CD4-positive, alpha-beta T cell (primary cell): ENCODE measurements at regions of chr4 and their contacts with region 1.

Region 1: DNA sequence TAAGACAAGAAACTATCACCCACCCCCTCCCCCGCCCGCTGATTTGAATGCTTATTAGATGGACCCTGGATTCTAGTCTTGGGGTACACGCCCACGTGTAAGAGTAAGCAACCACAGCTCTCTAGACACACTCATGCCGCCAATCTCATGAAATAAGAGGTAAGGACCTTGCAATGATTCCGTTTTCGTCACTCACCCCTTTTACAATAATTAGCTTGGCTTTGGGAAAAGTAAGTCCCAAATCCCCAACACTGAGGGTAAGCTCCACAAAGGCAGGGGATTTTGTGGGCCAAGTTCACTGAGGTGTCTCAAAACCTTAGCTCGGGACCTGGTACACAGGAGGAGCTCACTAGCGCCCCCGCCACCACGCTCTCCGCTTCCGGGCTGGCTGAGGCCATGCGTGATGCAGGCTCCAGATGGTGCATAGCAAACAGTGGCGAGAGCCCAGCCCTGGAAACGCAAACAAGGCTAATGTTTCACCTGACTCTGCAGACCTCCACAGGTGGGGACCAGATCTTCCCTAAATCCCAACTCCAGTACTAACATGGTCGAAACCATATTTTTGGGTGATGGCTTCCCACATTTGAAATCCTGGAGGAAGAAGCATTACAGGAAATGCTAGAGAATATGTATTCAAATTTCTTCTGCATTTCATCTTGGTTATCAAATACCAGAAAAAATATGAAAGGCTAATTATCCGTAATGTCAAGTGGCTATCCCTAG is 4.1 kb downstream of the PLAC8 start:
- DNase-seq: peak; percentile 79 to 94 (median 86)
- ATAC-seq: peak; percentile 76
- H3K4me3 ChIP-seq: peak overlapping the region; percentile 83
- H3K4me3 Mint-ChIP-seq: peak overlapping the region; percentile 88
- H3K27ac ChIP-seq: peak overlapping the region; percentile 44 to 65
- H3K27ac Mint-ChIP-seq: peak overlapping the region; percentile 89
- H3K4me1 ChIP-seq: peaks cover 45% of the 10 kb centered on the region
- H3K4me1 Mint-ChIP-seq: peaks cover 64% of the 10 kb centered on the region
- H3K27me3 ChIP-seq: no peaks in the 10 kb centered on the region
- H3K27me3 Mint-ChIP-seq: no peaks in the 10 kb centered on the region
- CTCF ChIP-seq: peak; percentile 85

Region 2: GRCh38 chr4:82677321-82677720 is 433.1 kb before region 1 on chr4:
- CTCF ChIA-PET with region 1: no interaction called
- POLR2A ChIA-PET with region 1: no interaction called
- intact Hi-C with region 1: no loop called
- DNase-seq: no peak
- ATAC-seq: no peak
- H3K4me3 ChIP-seq: no peak overlapping the region
- H3K4me3 Mint-ChIP-seq: no peak overlapping the region
- H3K27ac ChIP-seq: no peak overlapping the region
- H3K27ac Mint-ChIP-seq: no peak overlapping the region
- H3K4me1 ChIP-seq: no peaks in the 10 kb centered on the region
- H3K4me1 Mint-ChIP-seq: no peaks in the 10 kb centered on the region
- H3K27me3 ChIP-seq: peaks cover 2 to 4% of the 10 kb centered on the region in 2 experiments
- H3K27me3 Mint-ChIP-seq: peaks cover 5% of the 10 kb centered on the region
- CTCF ChIP-seq: no peak

Region 3: DNA sequence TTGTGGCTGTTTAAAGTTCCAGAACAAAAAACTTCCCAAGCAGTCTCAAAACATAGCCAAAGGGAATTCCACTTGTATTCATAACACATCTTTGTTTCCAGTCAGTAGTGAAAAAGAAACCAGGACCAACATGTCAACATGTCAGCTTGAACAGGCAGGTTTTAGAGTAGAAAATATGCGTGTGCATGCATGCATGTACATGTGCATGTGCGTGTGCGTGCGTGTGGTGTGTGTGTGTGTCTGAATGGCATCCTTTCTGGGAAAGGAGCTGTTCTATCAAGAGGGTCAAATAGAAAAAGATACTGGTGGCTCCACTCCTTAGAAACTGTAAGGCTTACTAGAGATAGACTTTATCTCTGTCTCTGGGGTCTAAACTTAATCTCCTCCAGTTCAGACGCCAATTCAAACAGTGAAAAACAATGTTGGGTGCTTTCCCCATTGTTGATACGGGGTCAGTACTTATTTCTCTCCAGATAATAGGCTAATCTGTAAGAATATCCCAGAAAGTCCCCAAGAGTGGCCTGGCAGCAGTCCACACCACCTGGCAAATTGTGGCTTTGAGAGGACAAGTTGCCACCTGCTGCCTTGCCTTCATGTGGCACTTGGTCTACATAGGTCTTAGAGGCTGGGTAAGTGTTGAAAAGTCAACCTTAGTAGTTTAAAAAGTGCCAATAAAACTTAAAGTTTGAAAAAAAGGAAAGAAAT is 422.1 kb before region 1 on chr4:
- CTCF ChIA-PET with region 1: no interaction called
- POLR2A ChIA-PET with region 1: no interaction called
- intact Hi-C with region 1: no loop called
- DNase-seq: no peak
- ATAC-seq: no peak
- H3K4me3 ChIP-seq: no peak overlapping the region
- H3K4me3 Mint-ChIP-seq: no peak overlapping the region
- H3K27ac ChIP-seq: no peak overlapping the region
- H3K27ac Mint-ChIP-seq: no peak overlapping the region
- H3K4me1 ChIP-seq: no peaks in the 10 kb centered on the region
- H3K4me1 Mint-ChIP-seq: no peaks in the 10 kb centered on the region
- H3K27me3 ChIP-seq: no peaks in the 10 kb centered on the region
- H3K27me3 Mint-ChIP-seq: peaks cover 19% of the 10 kb centered on the region
- CTCF ChIP-seq: no peak

Region 4: DNA sequence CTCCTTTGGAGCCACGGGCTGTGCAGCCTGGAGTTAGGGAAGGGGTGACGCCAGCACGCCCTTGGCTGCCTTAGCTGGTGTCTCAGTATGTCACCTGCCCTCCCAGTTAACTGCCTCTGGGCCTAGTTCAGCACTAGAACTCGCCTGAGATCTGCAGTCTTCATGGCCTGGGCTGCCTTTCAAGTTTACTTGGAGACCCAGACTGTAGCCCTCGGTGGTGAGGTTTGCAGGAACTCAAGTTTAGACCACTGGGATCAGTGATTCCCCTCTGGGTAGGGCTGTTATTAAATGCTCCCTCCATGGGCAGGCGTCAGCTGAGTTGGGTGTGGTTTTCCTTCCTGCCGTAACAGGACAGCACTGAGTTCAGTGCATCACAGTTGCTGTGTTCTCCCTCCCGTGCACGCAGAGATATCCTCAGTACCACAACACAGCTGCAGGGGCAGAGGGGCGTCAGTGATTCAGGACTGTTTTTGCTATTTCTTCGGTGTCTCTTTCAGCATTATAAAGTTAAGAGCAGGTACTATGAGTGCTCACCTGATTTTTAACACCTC is 26.4 kb before region 1 on chr4:
- CTCF ChIA-PET with region 1: interaction called, 10 read pairs
- POLR2A ChIA-PET with region 1: interaction called, 28 read pairs
- intact Hi-C with region 1: loop called (anchors 2 kb)
- DNase-seq: peak in 12 of 14 experiments; percentile 28 to 90 (median 66)
- ATAC-seq: peak; percentile 98
- H3K4me3 ChIP-seq: no peak overlapping the region
- H3K4me3 Mint-ChIP-seq: peak overlapping the region; percentile 60
- H3K27ac ChIP-seq: peak overlapping the region; percentile 22 to 69
- H3K27ac Mint-ChIP-seq: peak overlapping the region; percentile 99
- H3K4me1 ChIP-seq: peaks cover 28% of the 10 kb centered on the region
- H3K4me1 Mint-ChIP-seq: peaks cover 57% of the 10 kb centered on the region
- H3K27me3 ChIP-seq: no peaks in the 10 kb centered on the region
- H3K27me3 Mint-ChIP-seq: no peaks in the 10 kb centered on the region
- CTCF ChIP-seq: peak; percentile 53

Region 5: GRCh38 chr4:83212041-83212851 is 101.9 kb after region 1 on chr4:
- CTCF ChIA-PET with region 1: interaction called, 3 read pairs
- POLR2A ChIA-PET with region 1: interaction called, 167 read pairs
- intact Hi-C with region 1: loop called (anchors 2 to 5 kb)
- DNase-seq: peak; percentile 20 to 96 (median 44)
- ATAC-seq: peak; percentile 89
- H3K4me3 ChIP-seq: no peak overlapping the region
- H3K4me3 Mint-ChIP-seq: peak overlapping the region; percentile 55
- H3K27ac ChIP-seq: peak overlapping the region; percentile 7 to 59
- H3K27ac Mint-ChIP-seq: peak overlapping the region; percentile 81
- H3K4me1 ChIP-seq: peaks cover 67% of the 10 kb centered on the region
- H3K4me1 Mint-ChIP-seq: peaks cover 79% of the 10 kb centered on the region
- H3K27me3 ChIP-seq: no peaks in the 10 kb centered on the region
- H3K27me3 Mint-ChIP-seq: no peaks in the 10 kb centered on the region
- CTCF ChIP-seq: no peak

Region 6: GRCh38 chr4:83252782-83253405 is 142.5 kb after region 1 on chr4:
- CTCF ChIA-PET with region 1: interaction called, 9 read pairs
- POLR2A ChIA-PET with region 1: interaction called, 35 read pairs
- intact Hi-C with region 1: loop called (anchors 1 to 2 kb)
- DNase-seq: peak; percentile 52 to 88 (median 66)
- ATAC-seq: peak; percentile 98
- H3K4me3 ChIP-seq: no peak overlapping the region
- H3K4me3 Mint-ChIP-seq: no peak overlapping the region
- H3K27ac ChIP-seq: no peak overlapping the region
- H3K27ac Mint-ChIP-seq: peak overlapping the region; percentile 53
- H3K4me1 ChIP-seq: peaks cover 13% of the 10 kb centered on the region
- H3K4me1 Mint-ChIP-seq: peaks cover 30% of the 10 kb centered on the region
- H3K27me3 ChIP-seq: no peaks in the 10 kb centered on the region
- H3K27me3 Mint-ChIP-seq: no peaks in the 10 kb centered on the region
- CTCF ChIP-seq: peak; percentile 79